Esophagus squamous epithelium (tissue), 5 donors: ENCODE measurements at regions of chr1 and their contacts with region 1.

Region 1: GRCh38 chr1:111334169-111334568 is 43.5 kb downstream of the CHIA start:
- DNase-seq: no peak
- H3K4me3 ChIP-seq: no peak overlapping the region
- H3K27ac ChIP-seq: no peak overlapping the region
- H3K4me1 ChIP-seq: no peaks in the 10 kb centered on the region
- H3K27me3 ChIP-seq: no peaks in the 10 kb centered on the region
- CTCF ChIP-seq: peak in 5 of 6 experiments; percentile 26 to 62 (median 46)
- POLR2A ChIP-seq: no peak

Region 2: GRCh38 chr1:111222308-111223125 is 111.7 kb before region 1 on chr1:
- intact Hi-C with region 1: loop called (anchors 10 kb)
- DNase-seq: no peak
- H3K4me3 ChIP-seq: no peak overlapping the region
- H3K27ac ChIP-seq: peak overlapping the region in 2 of 4 donors; percentile 9 to 45
- H3K4me1 ChIP-seq: peaks cover 13 to 47% (median 19%) of the 10 kb centered on the region in 3 donors
- H3K27me3 ChIP-seq: no peaks in the 10 kb centered on the region
- CTCF ChIP-seq: peak; percentile 81 to 96 (median 90)
- POLR2A ChIP-seq: no peak

Region 3: DNA sequence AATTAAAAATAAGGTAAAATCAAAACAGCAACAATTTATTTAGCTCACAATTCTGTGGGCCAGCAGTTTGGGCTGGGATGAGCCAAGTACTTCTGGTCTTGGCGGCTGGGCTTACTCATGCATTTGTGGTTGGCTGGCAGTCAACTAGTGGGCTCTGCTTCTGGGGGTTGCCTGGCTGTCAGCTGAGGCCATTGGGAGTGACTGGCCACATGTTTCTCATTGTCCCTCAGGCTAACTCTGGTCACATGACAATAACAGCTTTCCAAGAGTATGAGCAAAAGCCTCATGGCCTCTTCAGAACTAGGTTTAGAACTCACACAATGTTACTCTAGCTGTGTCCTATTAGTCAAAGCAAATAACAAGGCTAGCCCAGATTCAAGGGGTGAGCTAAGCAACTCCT is 59.1 kb before region 1 on chr1:
- intact Hi-C with region 1: no loop called
- DNase-seq: no peak
- H3K4me3 ChIP-seq: no peak overlapping the region
- H3K27ac ChIP-seq: no peak overlapping the region
- H3K4me1 ChIP-seq: peaks cover 0 to 10% (median 4%) of the 10 kb centered on the region in 3 donors
- H3K27me3 ChIP-seq: peaks cover 6 to 32% (median 10%) of the 10 kb centered on the region in 4 donors
- CTCF ChIP-seq: no peak
- POLR2A ChIP-seq: no peak

Region 4: DNA sequence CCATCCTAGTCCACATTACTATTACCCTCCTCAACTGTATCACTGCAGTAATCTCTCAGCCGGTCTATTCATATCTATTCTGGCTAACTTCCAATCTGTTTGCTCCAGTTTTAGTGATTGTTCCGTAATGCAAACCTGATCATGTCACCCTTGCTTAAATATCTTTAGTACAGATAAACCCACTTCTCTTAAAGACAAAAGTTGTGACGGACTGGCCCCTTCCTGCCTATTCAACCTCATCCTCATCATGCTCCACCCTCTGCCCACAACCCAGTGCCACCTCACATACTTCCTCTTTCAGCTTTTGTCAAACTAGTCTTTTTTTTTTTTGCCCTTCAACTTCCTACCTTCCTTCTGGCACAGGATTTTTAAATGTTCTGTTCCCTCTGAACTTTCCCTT is 136.8 kb after region 1 on chr1:
- intact Hi-C with region 1: no loop called
- DNase-seq: peak; percentile 41
- H3K4me3 ChIP-seq: no peak overlapping the region
- H3K27ac ChIP-seq: peak overlapping the region; percentile 36 to 72 (median 57)
- H3K4me1 ChIP-seq: peaks cover 0 to 25% (median 2%) of the 10 kb centered on the region in 3 donors
- H3K27me3 ChIP-seq: no peaks in the 10 kb centered on the region
- CTCF ChIP-seq: no peak
- POLR2A ChIP-seq: peak in 1 of 4 donors; percentile 30